Posterior cingulate gyrus (tissue), 11 donors: ENCODE measurements at regions of chr7 and their contacts with region 1.

Region 1: GRCh38 chr7:141014524-141015395 is at the start of gene MRPS33:
- DNase-seq: peak; percentile 95 to 99 (median 97)

Region 2: DNA sequence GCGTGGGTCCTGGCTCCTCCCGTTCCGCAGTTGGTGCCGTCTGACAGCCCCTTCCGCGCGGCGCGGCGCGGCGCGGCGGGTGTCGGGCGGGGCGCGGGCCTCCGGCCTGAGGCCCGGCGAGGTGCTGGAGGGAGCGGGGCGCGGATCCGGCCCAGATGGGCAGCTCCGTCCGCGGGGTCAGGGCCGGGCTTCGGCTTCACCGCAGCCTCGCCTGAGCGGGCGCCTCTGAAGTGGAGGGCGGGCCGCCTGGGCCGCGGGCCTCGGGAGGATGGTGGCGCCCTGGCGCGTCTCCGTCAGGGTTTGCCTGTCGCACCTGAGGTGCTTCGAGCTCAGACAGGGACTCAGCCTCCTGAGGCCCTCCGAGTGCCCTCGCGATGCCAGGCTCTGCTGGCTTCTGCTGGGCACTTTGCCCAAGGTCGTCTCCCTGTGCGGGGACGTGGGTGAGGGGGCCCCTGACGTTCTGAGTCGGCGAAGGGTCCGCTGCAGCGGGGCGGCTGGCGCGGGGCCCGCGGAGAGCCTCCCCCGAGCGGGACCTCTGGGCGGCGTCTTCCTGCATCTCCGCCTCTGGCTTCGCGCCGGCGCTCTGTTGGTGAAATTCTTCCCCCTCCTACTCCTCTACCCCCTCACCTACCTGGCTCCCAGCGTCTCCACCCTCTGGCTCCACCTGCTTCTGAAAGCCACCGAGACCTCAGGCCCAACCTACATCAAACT is 341.5 kb before region 1 on chr7:
- intact Hi-C with region 1: loop called (anchors 5 kb)
- DNase-seq: peak in 6 of 10 donors; percentile 29 to 91 (median 44)

Region 3: DNA sequence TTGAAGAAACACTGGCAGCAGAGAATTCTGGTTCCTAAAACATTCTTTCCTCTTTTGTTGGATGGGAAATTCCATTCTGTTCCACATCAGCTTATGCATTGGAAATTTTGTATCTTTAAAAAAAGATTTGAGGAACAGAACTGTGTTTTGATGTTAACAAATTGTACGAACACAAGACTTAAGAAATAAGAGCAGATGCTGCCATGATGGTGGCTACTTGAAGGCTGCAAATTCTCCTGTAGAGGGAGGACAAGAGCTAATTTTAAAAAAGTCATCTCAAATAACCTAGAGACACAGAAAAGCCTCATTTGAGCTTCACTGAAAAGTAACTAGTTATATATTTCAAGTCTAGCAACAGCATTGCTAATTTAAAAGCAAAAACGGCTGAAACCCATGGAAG is 288.5 kb before region 1 on chr7:
- intact Hi-C with region 1: no loop called
- DNase-seq: no peak

Region 4: DNA sequence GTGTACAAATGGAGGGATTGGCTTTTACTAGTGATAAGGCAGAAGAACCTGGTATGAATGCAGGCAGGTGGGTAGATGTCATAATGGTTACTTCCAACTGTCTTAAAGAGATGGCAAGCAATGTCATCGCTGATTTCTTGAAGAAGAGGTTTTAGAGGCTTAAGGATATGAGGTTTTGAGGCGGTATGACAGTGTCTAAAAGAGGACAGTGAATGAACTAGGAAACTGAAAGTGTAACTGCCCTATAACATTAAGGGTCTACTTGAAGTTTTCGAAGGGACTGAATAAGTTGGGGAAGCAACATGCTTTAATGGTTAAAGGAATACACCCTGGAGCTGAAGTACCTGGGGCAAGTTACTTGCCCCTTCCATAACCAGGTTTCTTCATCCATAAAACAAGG is 247.3 kb before region 1 on chr7:
- intact Hi-C with region 1: no loop called
- DNase-seq: no peak

Region 5: DNA sequence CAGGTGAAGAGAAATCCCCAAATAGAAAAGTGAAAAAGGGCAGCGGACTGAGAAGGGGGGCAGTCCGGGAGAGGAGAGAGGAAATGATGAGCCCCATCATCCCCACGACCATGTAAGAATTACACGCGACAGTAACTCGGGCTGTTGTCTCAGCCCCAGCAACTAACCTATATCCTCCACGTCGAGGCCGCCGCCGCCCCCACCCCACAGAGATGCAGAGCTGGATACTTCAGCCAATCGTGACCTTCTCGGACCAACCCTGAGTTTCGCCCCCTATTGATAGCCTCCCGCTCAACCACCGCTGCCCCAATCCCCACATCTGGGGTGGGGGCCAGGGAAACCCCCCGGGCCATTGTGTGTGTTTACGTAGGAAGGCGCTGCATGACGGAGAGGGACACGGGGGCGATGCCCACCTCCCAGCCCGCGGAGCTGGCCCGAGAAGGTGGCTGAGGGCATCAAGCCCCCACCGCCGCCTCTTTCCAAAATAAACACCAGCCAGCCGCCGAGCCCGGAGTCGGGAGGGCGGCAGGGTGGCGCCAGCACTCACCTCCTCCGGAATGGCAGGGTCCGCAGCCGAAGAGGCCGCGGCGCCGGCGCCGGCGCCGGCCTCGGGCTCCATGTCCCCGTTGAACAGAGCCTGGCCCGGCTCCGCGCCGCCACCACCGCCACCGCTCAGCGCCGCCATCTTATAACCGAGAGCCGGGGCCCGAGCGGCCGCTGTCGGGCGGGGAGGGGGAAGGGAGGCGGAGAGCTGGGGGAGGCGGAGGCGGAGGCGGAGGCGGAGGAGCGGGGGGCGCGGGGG is 90.5 kb before region 1 on chr7:
- intact Hi-C with region 1: loop called (anchors 2 kb)
- DNase-seq: peak; percentile 54 to 96 (median 70)

Region 6: DNA sequence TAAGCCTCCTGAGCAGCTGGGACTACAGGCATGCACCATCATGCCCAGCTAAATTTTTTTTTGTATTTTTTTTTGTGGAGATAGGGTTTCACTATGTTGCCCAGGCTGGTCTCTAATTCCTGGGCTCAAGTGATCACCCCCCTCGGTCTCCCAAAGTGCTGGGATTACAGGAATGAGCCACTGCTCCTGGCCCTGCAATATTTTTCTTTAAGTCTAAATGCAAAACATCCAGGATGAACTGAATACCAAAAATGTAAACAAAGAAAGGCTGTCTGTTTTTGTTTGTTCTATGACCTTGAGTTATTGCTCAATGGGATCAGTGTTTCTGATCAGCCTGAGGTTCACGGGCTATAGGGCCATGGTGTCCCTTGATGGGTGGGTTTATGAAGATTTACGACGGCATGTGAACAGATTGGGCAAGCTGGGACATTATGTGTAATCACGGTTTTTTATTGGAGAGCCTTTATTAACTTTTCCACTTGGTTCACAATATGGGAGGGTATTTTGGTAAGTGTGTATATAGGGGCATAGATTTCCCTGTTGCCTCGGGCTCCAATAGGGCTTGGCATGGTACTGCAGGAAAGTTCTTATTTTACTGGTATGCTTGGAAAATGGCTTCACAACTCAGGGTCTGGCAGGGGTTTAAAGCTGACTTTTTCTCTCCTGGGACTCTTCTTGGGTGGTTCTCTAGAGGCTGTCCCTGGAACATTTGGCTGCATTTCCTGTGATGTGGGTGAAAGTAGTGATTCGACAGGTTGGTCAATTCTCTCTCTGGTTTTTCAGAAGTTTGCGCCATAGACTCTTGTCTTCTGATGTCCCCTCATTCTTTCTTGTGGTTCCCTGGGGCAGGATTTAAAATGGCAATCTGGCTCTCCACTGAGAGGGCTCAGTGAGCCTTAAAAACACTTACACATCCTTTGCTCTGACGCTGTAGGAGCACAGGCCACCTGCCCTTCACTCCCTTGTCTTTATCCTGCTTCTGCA is 41.6 kb before region 1 on chr7:
- intact Hi-C with region 1: no loop called
- DNase-seq: no peak

Region 7: GRCh38 chr7:141115965-141116364 is 101.2 kb after region 1 on chr7:
- intact Hi-C with region 1: no loop called
- DNase-seq: no peak

Region 8: DNA sequence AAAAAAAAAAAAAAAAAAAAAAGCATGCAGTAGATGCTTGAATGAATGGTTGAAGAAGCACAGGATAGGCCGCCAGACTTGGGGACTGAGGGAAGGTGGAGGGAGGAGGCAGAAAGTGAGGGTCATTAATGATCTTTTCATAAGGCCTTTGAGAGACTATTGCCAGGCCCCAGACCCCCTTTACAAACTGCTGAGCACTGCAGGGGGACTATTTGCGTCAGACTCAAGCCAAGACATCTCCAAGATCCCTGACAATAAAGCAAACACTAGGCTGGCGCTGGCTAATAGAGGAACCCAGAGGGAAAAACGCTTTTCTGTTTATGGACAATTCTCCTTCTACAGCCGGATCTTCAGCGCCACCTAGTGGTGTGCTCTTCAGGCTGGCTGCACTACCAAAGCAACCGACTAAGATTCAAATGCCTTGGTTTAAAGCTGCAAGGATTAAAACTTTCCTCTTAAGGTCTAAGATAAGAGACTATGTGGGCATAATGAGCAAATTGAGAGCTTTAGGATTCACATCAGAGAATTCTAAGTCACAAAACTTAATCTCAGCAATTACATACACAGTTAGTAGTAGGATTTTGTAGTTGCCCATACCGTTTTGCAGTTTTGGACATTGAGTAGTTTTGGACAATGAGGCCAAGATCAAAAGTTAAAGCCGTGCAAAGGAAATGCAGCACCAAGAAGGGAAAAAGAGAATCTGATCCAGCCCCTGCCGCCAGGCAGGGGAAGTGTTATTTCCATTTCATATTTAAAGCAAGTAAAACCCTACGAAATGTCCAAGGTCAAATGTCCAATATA is 518.6 kb after region 1 on chr7:
- intact Hi-C with region 1: loop called (anchors 1 kb)
- DNase-seq: peak; percentile 49 to 94 (median 72)